Activated CD4-positive, alpha-beta T cell treated with anti-CD3 and anti-CD28 coated beads, Interleukin-2, amount 10 ng/mL, durations not matched to agents 24 days and 14 days (primary cell): ENCODE measurements at regions of chr6 and their contacts with region 1.

Region 1: GRCh38 chr6:42166444-42167141 is 6.6 kb upstream of the GUCA1A start:
- DNase-seq: peak; percentile 95
- H3K4me3 Mint-ChIP-seq: no peak overlapping the region
- H3K27ac Mint-ChIP-seq: no peak overlapping the region
- H3K4me1 Mint-ChIP-seq: peaks cover 7% of the 10 kb centered on the region
- H3K27me3 Mint-ChIP-seq: peaks cover 7% of the 10 kb centered on the region

Region 2: DNA sequence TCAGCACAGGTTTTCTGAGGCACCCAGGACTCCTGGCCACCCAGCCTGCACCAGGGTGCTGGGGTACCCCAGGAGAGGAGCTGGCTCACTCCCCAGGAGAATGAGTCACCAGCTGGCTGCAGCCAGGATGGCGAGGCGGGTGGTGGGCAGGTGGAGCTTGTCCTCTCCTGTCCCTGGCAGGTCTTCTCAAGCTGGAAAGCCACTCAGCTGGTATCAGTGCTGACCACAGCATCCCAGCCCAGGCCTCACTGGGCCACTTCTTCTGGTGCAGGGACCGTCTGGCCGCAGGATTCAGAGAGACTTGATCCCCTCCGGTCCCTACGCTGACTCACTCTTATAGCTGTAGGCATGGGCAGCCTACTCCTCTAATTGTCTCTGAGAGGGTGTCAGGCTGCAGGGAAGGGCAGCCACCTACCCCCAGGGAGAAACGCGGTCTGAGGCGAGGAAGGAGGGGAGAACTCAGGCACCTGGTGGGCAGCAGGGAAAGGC is 453.4 kb before region 1 on chr6:
- intact Hi-C with region 1: no loop called
- DNase-seq: no peak
- H3K4me3 Mint-ChIP-seq: no peak overlapping the region
- H3K27ac Mint-ChIP-seq: no peak overlapping the region
- H3K4me1 Mint-ChIP-seq: peaks cover 18% of the 10 kb centered on the region
- H3K27me3 Mint-ChIP-seq: no peaks in the 10 kb centered on the region

Region 3: DNA sequence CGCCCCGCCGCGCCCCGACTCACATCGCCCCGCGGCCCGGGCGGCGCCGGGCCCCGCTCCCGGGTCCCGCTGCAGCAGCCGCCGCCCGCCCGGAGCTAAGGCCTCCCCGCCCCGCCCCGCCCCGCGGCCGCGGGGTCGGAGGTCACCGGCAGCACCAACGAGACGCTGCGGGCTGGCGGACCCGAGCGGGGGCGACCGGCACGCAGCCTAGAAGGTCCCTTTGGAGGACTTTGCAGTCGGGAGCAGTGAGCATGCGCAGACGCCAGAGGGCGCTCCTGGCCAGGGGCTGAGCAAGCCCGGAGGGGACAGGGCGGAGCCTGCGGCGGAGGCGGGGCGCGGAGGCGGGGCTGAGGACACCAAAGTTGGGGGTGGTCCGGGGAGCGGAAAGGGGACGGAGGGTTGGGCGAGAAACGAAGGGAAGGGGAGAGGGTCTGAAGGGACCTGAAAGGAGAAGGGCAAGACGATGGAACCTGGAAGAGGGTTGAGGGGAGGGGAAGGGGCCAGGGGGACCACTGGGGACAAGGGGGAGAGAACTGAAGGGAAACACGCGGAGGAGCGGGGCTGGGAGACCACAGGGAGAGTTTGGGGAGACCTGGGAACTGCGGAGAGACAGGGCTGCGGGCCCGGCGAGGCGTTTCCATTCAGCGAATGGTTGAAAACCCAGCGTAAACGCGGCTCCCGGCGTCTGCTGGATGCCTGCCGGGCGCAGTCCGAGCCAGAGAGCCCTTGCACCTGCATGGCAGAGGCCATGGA is 386.6 kb before region 1 on chr6 and contains the start of gene FRS3:
- intact Hi-C with region 1: loop called (anchors 1 kb)
- DNase-seq: peak; percentile 100
- H3K4me3 Mint-ChIP-seq: peak within 1 kb of the TSS; percentile 96
- H3K27ac Mint-ChIP-seq: peak within 1 kb of the TSS; percentile 81
- H3K4me1 Mint-ChIP-seq: peaks cover 22% of the 10 kb centered on the region
- H3K27me3 Mint-ChIP-seq: peaks cover 19% of the 10 kb centered on the region
- total RNA-seq, gene FRS3: 4.7 and 6.8 TPM in 2 replicates

Region 4: GRCh38 chr6:41846666-41847237 is 319.8 kb before region 1 on chr6:
- intact Hi-C with region 1: loop called (anchors 5 kb)
- DNase-seq: peak; percentile 90
- H3K4me3 Mint-ChIP-seq: no peak overlapping the region
- H3K27ac Mint-ChIP-seq: no peak overlapping the region
- H3K4me1 Mint-ChIP-seq: peaks cover 10% of the 10 kb centered on the region
- H3K27me3 Mint-ChIP-seq: no peaks in the 10 kb centered on the region

Region 5: DNA sequence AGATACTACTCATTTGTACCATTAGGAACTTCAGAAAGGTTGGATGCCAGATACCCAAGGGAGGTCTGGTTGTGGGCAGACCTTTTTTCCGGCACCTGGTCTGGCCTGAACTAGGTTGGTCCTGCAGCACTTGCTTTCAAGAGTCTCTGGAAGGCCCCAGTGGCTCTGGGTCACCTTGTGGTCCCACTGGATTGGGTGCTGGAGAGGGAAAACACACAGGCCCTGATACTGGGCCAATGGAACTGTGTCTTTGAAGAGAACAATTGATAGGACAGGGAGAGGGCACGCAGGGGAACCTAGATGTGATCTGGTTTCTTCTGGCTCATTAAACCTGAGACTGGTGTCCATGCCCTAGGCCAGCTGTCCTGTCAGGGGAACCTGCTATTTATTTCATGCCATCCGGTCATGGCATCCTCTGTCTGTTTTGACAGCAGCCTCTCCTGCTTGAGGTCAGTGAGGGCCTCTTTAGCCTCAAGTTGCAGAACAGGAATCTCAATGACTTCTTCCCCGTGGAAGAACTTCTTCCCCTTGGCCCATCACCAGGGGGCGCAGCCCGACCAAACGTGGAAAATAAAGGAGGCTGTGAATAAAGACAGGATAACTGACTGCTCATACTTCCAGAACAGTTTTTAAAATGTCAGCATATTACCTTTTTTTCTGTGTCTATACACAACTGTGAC is 91.3 kb before region 1 on chr6:
- intact Hi-C with region 1: loop called (anchors 1 kb)
- DNase-seq: peak; percentile 88
- H3K4me3 Mint-ChIP-seq: no peak overlapping the region
- H3K27ac Mint-ChIP-seq: no peak overlapping the region
- H3K4me1 Mint-ChIP-seq: peaks cover 8% of the 10 kb centered on the region
- H3K27me3 Mint-ChIP-seq: no peaks in the 10 kb centered on the region

Region 6: DNA sequence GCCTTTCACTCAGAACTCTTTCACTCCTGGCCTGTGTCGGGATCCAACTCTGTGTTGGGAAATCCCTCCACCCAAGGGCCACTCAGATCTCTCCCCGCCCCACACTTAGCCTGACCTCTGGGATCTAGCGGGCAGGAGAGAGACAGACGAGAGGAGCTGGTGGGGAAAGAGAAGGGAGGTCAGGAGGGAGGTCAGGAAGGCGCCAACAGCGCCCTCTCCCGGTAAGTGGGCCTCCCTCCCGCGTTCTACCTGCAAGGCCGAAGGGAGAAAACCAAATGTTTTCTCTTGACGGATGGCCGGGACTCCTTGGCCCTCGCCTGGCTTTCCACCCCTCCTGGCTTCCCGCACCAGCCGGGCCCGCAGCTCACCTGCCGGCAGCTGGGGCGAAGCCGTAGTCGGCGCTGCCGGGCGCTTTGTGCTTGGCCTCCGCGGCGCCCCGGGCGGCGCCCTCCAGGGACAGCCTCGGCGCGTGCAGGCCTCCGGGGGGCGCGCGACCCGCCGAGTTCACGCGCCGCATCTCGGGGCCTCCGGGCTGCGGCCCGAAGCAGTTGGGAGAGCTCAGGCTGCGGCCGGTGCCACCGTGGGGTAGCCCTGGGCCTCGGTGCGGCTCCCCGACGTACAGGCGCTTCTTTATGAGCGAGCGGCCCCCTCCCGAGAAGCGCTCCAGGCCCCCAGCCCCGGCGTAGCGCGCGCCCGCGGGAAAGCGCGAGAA is 62.3 kb before region 1 on chr6:
- intact Hi-C with region 1: loop called (anchors 2 kb)
- DNase-seq: peak; percentile 92
- H3K4me3 Mint-ChIP-seq: peak overlapping the region; percentile 78
- H3K27ac Mint-ChIP-seq: peak overlapping the region; percentile 78
- H3K4me1 Mint-ChIP-seq: peaks cover 29% of the 10 kb centered on the region
- H3K27me3 Mint-ChIP-seq: peaks cover 6% of the 10 kb centered on the region